ENCODE measurements at regions of chr19 and their contacts with region 1.

Region 1: GRCh38 chr19:57708641-57709361 is at the start of gene ZNF154:
- DNase-seq: peak; percentile 78
- total RNA-seq, gene ZNF154: 3.7 to 5.9 TPM

Region 2: GRCh38 chr19:57672466-57672865 is 36.3 kb before region 1 on chr19:
- intact Hi-C with region 1: loop called in 1 of 2 experiments (anchors 1 kb)
- DNase-seq: no peak

Measured in posterior vena cava (tissue), 2 donors.